ENCODE measurements at regions of chr11 and their contacts with region 1.

Region 1: GRCh38 chr11:33829433-33830141 is 55.3 kb upstream of the FBXO3 start:
- DNase-seq: peak; percentile 18 to 75 (median 49)
- ATAC-seq: peak; percentile 88
- H3K4me3 ChIP-seq: peak overlapping the region; percentile 2 to 19
- H3K4me3 Mint-ChIP-seq: peak overlapping the region; percentile 83
- H3K27ac ChIP-seq: no peak overlapping the region
- H3K27ac Mint-ChIP-seq: no peak overlapping the region
- H3K4me1 ChIP-seq: peaks cover 7% of the 10 kb centered on the region
- H3K4me1 Mint-ChIP-seq: peaks cover 6% of the 10 kb centered on the region
- H3K27me3 ChIP-seq: peaks cover 10% of the 10 kb centered on the region in 2 experiments
- H3K27me3 Mint-ChIP-seq: peaks cover 57% of the 10 kb centered on the region
- CTCF ChIP-seq: peak; percentile 51

Region 2: GRCh38 chr11:33168709-33169200 is 660.8 kb before region 1 on chr11:
- CTCF ChIA-PET with region 1: no interaction called
- POLR2A ChIA-PET with region 1: no interaction called
- intact Hi-C with region 1: loop called in 1 of 2 experiments (anchors 5 kb)
- DNase-seq: no peak
- ATAC-seq: no peak
- H3K4me3 ChIP-seq: no peak overlapping the region
- H3K4me3 Mint-ChIP-seq: no peak overlapping the region
- H3K27ac ChIP-seq: no peak overlapping the region
- H3K27ac Mint-ChIP-seq: no peak overlapping the region
- H3K4me1 ChIP-seq: no peaks in the 10 kb centered on the region
- H3K4me1 Mint-ChIP-seq: no peaks in the 10 kb centered on the region
- H3K27me3 ChIP-seq: no peaks in the 10 kb centered on the region
- H3K27me3 Mint-ChIP-seq: no peaks in the 10 kb centered on the region
- CTCF ChIP-seq: no peak

Region 3: GRCh38 chr11:33362051-33362910 is 467.3 kb before region 1 on chr11:
- CTCF ChIA-PET with region 1: interaction called, 3 read pairs
- POLR2A ChIA-PET with region 1: no interaction called
- intact Hi-C with region 1: loop called in 1 of 2 experiments (anchors 1 kb)
- DNase-seq: peak in 3 of 9 experiments; percentile 16 to 65 (median 56)
- ATAC-seq: peak; percentile 54
- H3K4me3 ChIP-seq: no peak overlapping the region
- H3K4me3 Mint-ChIP-seq: no peak overlapping the region
- H3K27ac ChIP-seq: no peak overlapping the region
- H3K27ac Mint-ChIP-seq: no peak overlapping the region
- H3K4me1 ChIP-seq: no peaks in the 10 kb centered on the region
- H3K4me1 Mint-ChIP-seq: peaks cover 2% of the 10 kb centered on the region
- H3K27me3 ChIP-seq: no peaks in the 10 kb centered on the region
- H3K27me3 Mint-ChIP-seq: peaks cover 10% of the 10 kb centered on the region
- CTCF ChIP-seq: peak; percentile 76

Region 4: DNA sequence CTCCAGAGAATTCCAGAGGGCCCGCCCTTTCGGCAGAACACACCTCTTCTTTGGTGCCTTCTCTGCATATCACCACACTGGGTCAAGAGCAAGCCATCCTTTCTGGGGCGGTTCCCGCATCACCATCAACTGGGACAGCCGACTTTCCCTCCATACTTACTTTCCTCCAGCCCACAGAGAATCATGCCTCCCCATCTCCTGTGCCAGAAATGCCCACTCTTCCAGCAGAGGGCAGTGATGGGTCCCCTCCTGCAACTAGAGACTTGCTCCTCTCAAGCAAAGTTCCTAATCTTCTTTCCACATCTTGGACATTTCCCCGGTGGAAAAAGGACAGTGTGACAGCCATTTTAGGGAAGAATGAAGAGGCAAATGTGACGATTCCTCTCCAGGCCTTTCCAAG is 286.7 kb before region 1 on chr11:
- CTCF ChIA-PET with region 1: no interaction called
- POLR2A ChIA-PET with region 1: no interaction called
- intact Hi-C with region 1: loop called in 1 of 2 experiments (anchors 2 kb)
- DNase-seq: peak in 6 of 9 experiments; percentile 20 to 53 (median 29)
- ATAC-seq: no peak
- H3K4me3 ChIP-seq: no peak overlapping the region
- H3K4me3 Mint-ChIP-seq: no peak overlapping the region
- H3K27ac ChIP-seq: no peak overlapping the region
- H3K27ac Mint-ChIP-seq: no peak overlapping the region
- H3K4me1 ChIP-seq: no peaks in the 10 kb centered on the region
- H3K4me1 Mint-ChIP-seq: no peaks in the 10 kb centered on the region
- H3K27me3 ChIP-seq: no peaks in the 10 kb centered on the region
- H3K27me3 Mint-ChIP-seq: peaks cover 24% of the 10 kb centered on the region
- CTCF ChIP-seq: no peak

Region 5: DNA sequence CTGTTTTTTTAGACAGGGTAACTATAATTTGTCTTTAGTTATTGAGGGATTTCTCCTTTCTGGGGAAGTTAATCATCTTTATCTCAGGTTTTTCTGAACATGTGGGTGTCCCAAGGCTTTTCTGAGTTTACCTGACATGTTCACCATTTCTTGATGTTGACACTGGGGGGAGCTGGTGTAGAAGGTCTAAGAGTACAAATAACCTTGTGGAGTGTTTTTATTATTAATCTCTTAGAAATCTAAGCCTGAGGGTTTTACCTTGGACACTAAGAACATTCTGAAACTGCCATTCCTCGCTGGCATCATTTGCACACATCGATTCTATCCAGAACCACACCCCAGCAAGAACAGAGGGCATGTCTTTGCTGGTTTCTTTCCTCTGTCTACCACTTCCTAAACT is 113.4 kb before region 1 on chr11:
- CTCF ChIA-PET with region 1: interaction called, 5 read pairs
- POLR2A ChIA-PET with region 1: no interaction called
- intact Hi-C with region 1: loop called (anchors 1 to 5 kb)
- DNase-seq: peak in 2 of 9 experiments; percentile 34 to 44
- ATAC-seq: no peak
- H3K4me3 ChIP-seq: no peak overlapping the region
- H3K4me3 Mint-ChIP-seq: no peak overlapping the region
- H3K27ac ChIP-seq: no peak overlapping the region
- H3K27ac Mint-ChIP-seq: no peak overlapping the region
- H3K4me1 ChIP-seq: no peaks in the 10 kb centered on the region
- H3K4me1 Mint-ChIP-seq: no peaks in the 10 kb centered on the region
- H3K27me3 ChIP-seq: no peaks in the 10 kb centered on the region
- H3K27me3 Mint-ChIP-seq: no peaks in the 10 kb centered on the region
- CTCF ChIP-seq: no peak

Measured in CD8-positive, alpha-beta T cell (primary cell).